Endothelial cell of umbilical vein (primary cell): ENCODE measurements at regions of chr15 and their contacts with region 1.

Region 1: GRCh38 chr15:48536681-48537091 is 108.8 kb downstream of the FBN1 start:
- DNase-seq: peak; percentile 96
- H3K4me3 ChIP-seq: peak overlapping the region in 1 of 3 experiments; percentile 5
- H3K27ac ChIP-seq: peak overlapping the region; percentile 91
- H3K4me1 ChIP-seq: peaks cover 24% of the 10 kb centered on the region
- H3K27me3 ChIP-seq: no peaks in the 10 kb centered on the region
- CTCF ChIP-seq: no peak
- POLR2A ChIP-seq: peak; percentile 44

Region 2: GRCh38 chr15:48449734-48450133 is 87.0 kb before region 1 on chr15:
- CTCF ChIA-PET with region 1: no interaction called
- POLR2A ChIA-PET with region 1: no interaction called
- dilution Hi-C with region 1: no loop called
- intact Hi-C with region 1: loop called (anchors 1 kb)
- DNase-seq: no peak
- H3K4me3 ChIP-seq: no peak overlapping the region
- H3K27ac ChIP-seq: no peak overlapping the region
- H3K4me1 ChIP-seq: peaks cover 38% of the 10 kb centered on the region
- H3K27me3 ChIP-seq: no peaks in the 10 kb centered on the region
- CTCF ChIP-seq: no peak
- POLR2A ChIP-seq: no peak

Region 3: GRCh38 chr15:48553559-48553958 is 16.9 kb after region 1 on chr15:
- CTCF ChIA-PET with region 1: interaction called, 6 read pairs
- POLR2A ChIA-PET with region 1: interaction called, 3 read pairs
- dilution Hi-C with region 1: no loop called
- intact Hi-C with region 1: loop called (anchors 2 kb)
- DNase-seq: peak; percentile 61
- H3K4me3 ChIP-seq: no peak overlapping the region
- H3K27ac ChIP-seq: peak overlapping the region; percentile 11
- H3K4me1 ChIP-seq: peaks cover 27% of the 10 kb centered on the region
- H3K27me3 ChIP-seq: no peaks in the 10 kb centered on the region
- CTCF ChIP-seq: no peak
- POLR2A ChIP-seq: no peak

Region 4: DNA sequence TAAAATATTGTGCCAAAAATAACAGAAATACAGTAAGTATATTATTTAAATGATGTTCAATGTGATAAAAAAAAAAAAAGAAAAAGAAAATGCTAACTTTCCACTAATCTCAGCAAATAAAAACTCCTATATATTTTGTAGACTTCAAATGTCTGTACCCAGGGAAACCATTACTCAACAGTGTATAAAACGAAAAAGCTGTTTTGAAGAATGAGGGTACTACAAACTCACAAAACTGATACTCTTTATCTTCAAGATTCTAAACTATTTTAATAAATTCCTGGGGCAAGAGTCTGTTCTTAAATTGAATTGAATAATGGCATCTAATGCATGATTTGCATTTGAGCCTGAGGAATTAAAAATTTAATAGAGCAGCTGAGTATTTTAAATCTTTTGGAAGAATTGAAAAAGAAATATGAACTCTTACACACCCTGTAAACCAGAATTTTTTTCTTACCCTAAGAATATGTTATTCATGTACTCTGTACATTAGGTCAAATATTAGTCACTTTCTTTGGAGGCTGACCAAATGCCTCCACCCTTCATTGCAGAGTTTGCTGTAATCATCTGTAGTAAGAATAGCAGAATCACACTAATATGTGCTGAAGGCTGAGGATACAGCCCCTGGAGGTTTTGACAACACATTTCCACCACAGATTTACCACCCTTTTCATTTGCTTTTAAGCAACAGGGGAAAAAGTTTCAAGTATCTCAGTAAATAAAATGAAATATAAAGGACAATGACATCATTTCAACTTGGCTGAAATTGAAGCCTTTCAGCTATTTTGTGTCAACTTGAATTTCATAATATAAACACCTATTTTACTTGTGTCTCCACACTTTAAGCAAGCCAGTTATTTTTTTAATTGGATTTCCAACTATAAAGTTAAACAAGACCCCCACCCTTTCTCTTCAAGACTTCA is 29.1 kb after region 1 on chr15:
- CTCF ChIA-PET with region 1: interaction called, 4 read pairs
- POLR2A ChIA-PET with region 1: interaction called, 5 read pairs
- dilution Hi-C with region 1: no loop called
- intact Hi-C with region 1: loop called (anchors 1 kb)
- DNase-seq: peak; percentile 98
- H3K4me3 ChIP-seq: peak overlapping the region in 1 of 3 experiments; percentile 28
- H3K27ac ChIP-seq: peak overlapping the region; percentile 84
- H3K4me1 ChIP-seq: peaks cover 33% of the 10 kb centered on the region
- H3K27me3 ChIP-seq: no peaks in the 10 kb centered on the region
- CTCF ChIP-seq: no peak
- POLR2A ChIP-seq: no peak

Region 5: GRCh38 chr15:48602358-48603122 is 65.9 kb after region 1 on chr15:
- CTCF ChIA-PET with region 1: interaction called, 4 read pairs
- POLR2A ChIA-PET with region 1: no interaction called
- dilution Hi-C with region 1: no loop called
- intact Hi-C with region 1: loop called (anchors 2 kb)
- DNase-seq: peak; percentile 91
- H3K4me3 ChIP-seq: peak overlapping the region in 1 of 3 experiments; percentile 13
- H3K27ac ChIP-seq: peak overlapping the region; percentile 71
- H3K4me1 ChIP-seq: peaks cover 26% of the 10 kb centered on the region
- H3K27me3 ChIP-seq: no peaks in the 10 kb centered on the region
- CTCF ChIP-seq: no peak
- POLR2A ChIP-seq: no peak

Region 6: DNA sequence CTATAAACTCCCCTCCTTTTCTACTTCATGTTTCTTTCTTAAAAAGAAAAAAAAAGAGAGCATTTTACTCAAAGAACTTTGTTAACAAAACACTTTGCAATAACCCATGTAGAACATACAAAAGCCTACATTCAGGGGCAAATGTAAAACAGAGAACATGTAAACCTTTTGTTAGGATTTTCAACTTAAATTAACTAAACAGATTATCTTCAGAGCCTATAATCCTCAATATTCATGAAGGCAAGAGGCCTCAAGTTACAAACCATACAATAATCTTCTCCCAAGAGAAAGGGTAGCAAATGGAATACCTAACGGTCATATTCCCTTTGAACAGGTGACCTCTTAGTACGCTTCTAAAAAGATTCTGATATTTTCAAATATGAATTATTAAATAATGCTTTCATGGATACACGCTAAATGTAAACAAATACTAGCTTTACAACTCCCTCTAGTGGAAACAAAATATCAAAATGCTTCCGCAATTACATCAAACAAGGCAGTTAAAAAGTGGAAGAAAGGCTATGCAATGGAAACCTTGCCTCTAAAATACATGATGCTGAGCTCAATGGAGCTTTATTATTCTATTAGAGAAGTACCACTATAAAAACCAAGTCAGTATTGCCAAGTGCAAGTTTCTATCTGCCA is 264.2 kb after region 1 on chr15:
- CTCF ChIA-PET with region 1: interaction called, 12 read pairs
- POLR2A ChIA-PET with region 1: no interaction called
- dilution Hi-C with region 1: no loop called
- intact Hi-C with region 1: no loop called
- DNase-seq: peak; percentile 72
- H3K4me3 ChIP-seq: no peak overlapping the region
- H3K27ac ChIP-seq: no peak overlapping the region
- H3K4me1 ChIP-seq: peaks cover 1% of the 10 kb centered on the region
- H3K27me3 ChIP-seq: no peaks in the 10 kb centered on the region
- CTCF ChIP-seq: peak; percentile 24 to 25
- POLR2A ChIP-seq: no peak